Activated B cell treated with CpG ODN at 0.5 μM for 24 hours (primary cell): ENCODE measurements at regions of chr6 and their contacts with region 1.

Region 1: DNA sequence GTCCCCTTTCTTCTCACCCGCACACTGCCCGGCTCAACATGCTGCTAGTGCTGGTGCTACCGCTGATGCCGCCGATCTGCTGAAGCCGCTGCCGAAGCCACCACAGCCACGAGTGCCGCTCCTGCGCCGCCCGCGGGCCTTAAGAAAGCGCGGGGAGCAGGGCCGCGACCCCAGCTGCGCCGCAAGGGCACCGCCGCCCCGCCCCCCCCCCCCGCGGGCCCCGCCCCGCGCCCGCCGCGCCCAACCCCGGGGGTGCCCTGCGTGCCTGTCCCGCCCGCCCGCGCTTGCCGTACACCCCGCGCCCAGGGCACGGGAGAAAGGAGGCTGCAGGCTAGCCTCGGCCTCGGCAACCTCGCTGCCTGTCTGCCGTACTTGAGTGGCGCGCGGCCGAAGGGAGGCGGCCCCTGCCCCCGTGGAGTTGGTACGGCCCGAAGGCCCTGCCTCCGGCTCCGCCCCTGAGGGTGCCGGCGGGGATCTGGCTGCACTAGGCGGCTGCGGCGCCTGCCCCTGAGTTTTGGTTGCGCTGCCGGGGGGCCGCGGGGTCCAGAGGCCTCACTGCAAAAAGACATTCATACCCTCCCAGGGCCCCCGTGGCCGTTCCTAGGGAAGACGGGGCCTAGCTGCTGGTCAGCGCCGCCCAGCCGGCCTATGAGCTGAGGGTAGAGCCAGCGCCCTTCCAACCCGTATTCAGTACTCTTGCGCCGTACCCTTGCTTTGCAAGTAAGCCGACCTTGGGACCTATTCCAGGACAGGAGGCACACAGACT is at the start of gene SOD2:
- DNase-seq: peak; percentile 89
- ATAC-seq: peak; percentile 81
- H3K4me3 Mint-ChIP-seq: peak within 1 kb of the TSS; percentile 94
- H3K27ac Mint-ChIP-seq: peak within 1 kb of the TSS; percentile 92
- H3K4me1 Mint-ChIP-seq: peaks cover 36% of the 10 kb centered on the region
- H3K27me3 Mint-ChIP-seq: no peaks in the 10 kb centered on the region
- CTCF ChIP-seq: no peak
- total RNA-seq, gene SOD2: 91.0 and 98.2 TPM in 2 replicates

Region 2: GRCh38 chr6:159720708-159721107 is 27.4 kb after region 1 on chr6:
- CTCF ChIA-PET with region 1: interaction called, 11 read pairs
- POLR2A ChIA-PET with region 1: interaction called, 95 read pairs
- intact Hi-C with region 1: no loop called
- DNase-seq: no peak
- ATAC-seq: peak; percentile 58
- H3K4me3 Mint-ChIP-seq: no peak overlapping the region
- H3K27ac Mint-ChIP-seq: no peak overlapping the region
- H3K4me1 Mint-ChIP-seq: peaks cover 7% of the 10 kb centered on the region
- H3K27me3 Mint-ChIP-seq: no peaks in the 10 kb centered on the region
- CTCF ChIP-seq: no peak

Region 3: GRCh38 chr6:159761873-159762680 is 68.8 kb after region 1 on chr6 and contains the start of gene ACAT2:
- CTCF ChIA-PET with region 1: no interaction called
- POLR2A ChIA-PET with region 1: interaction called, 7 read pairs
- intact Hi-C with region 1: loop called (anchors 1 kb)
- DNase-seq: peak; percentile 85
- ATAC-seq: peak; percentile 95
- H3K4me3 Mint-ChIP-seq: peak within 1 kb of the TSS; percentile 96
- H3K27ac Mint-ChIP-seq: peak within 1 kb of the TSS; percentile 94
- H3K4me1 Mint-ChIP-seq: peaks cover 18% of the 10 kb centered on the region
- H3K27me3 Mint-ChIP-seq: no peaks in the 10 kb centered on the region
- CTCF ChIP-seq: no peak
- total RNA-seq, gene ACAT2: 82.0 and 87.9 TPM in 2 replicates

Region 4: GRCh38 chr6:159852877-159853276 is 159.6 kb after region 1 on chr6:
- CTCF ChIA-PET with region 1: interaction called, 3 read pairs
- POLR2A ChIA-PET with region 1: no interaction called
- intact Hi-C with region 1: loop called (anchors 1 kb)
- DNase-seq: no peak
- ATAC-seq: no peak
- H3K4me3 Mint-ChIP-seq: no peak overlapping the region
- H3K27ac Mint-ChIP-seq: no peak overlapping the region
- H3K4me1 Mint-ChIP-seq: no peaks in the 10 kb centered on the region
- H3K27me3 Mint-ChIP-seq: peaks cover 8% of the 10 kb centered on the region
- CTCF ChIP-seq: no peak

Region 5: GRCh38 chr6:159959165-159959975 is 266.1 kb after region 1 on chr6:
- CTCF ChIA-PET with region 1: no interaction called
- POLR2A ChIA-PET with region 1: no interaction called
- intact Hi-C with region 1: no loop called
- DNase-seq: no peak
- ATAC-seq: peak; percentile 97
- H3K4me3 Mint-ChIP-seq: no peak overlapping the region
- H3K27ac Mint-ChIP-seq: peak overlapping the region; percentile 57
- H3K4me1 Mint-ChIP-seq: peaks cover 14% of the 10 kb centered on the region
- H3K27me3 Mint-ChIP-seq: no peaks in the 10 kb centered on the region
- CTCF ChIP-seq: no peak

Region 6: DNA sequence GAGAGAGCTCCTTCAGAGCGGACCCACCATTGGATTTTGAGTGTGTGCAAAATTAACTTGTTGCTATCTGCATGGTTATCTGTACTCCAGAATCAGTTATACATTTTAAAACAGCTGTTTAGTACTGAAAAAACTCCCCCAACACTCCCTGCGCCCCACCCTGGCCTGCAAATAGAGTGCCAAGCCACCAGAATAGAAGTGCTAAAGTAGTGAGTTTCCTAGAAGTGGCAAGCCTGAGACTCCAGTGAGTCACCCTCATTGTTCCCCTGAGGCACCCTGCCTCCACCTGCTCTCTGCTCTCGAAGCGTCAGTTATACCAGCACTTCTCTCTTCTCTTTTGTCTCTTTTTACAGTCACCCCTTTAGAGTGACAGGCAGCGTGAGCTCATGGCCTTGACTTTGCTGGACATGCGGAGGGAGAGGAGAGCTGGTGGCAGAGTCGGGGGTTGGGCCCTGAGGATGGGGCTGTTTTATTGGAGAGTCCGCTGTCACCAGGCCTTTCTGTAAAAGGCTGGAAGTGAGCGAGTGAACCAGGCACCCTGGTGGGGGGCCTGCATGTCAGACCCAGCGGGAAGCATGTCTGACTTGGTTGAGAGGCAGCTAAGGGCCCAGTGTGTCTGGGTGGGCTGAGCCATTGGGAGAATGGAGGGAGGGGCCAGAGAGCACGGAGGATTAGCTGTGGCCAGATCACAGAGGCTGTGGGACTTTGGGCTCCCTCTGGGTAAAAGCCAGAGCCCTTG is 286.0 kb after region 1 on chr6:
- CTCF ChIA-PET with region 1: no interaction called
- POLR2A ChIA-PET with region 1: interaction called, 4 read pairs
- intact Hi-C with region 1: loop called (anchors 2 kb)
- DNase-seq: peak; percentile 61
- ATAC-seq: peak; percentile 86
- H3K4me3 Mint-ChIP-seq: peak overlapping the region; percentile 76
- H3K27ac Mint-ChIP-seq: peak overlapping the region; percentile 90
- H3K4me1 Mint-ChIP-seq: peaks cover 88% of the 10 kb centered on the region
- H3K27me3 Mint-ChIP-seq: no peaks in the 10 kb centered on the region
- CTCF ChIP-seq: no peak

Region 7: DNA sequence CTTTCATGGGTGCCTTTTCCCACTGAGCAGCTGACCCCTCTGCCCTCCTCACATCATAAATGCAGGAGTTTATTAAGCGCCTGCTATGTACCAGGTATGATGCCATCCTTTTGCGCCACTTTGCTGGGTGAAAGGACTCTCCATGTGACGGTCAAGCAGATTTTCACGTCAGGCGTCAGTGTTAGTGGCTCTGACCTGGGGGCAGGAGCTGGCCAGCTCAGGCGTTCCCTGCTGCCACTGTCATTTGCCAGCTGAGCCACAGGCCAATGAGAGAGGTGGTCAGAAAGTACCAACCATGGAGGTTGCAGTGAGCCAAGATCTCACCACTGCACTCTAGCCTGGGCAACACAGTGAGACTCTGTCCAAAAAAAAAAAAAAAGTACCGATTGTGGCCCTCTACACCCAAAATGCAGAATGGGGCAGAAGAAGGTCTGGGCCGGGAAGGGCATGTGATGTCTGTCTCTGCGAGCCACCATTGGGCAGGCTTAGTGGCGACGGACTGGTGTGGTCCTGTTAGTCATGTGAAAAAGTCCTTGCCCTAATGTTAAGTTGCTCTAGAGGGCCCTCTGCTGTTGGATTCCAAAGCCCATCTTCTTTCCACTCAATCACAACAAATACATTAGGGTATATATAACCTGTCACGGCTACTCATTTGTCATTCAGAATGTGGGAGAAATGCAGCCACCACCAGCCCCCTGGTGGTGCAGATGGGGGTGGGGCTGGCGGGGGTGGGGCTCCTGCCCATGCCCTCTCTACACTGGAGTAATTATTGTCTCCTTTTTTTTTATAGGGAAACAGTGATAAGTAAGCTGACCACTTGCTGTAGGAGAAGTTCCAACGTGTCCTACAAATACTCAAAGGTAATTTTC is 409.9 kb after region 1 on chr6:
- CTCF ChIA-PET with region 1: no interaction called
- POLR2A ChIA-PET with region 1: no interaction called
- intact Hi-C with region 1: loop called (anchors 1 kb)
- DNase-seq: no peak
- ATAC-seq: peak; percentile 45
- H3K4me3 Mint-ChIP-seq: no peak overlapping the region
- H3K27ac Mint-ChIP-seq: no peak overlapping the region
- H3K4me1 Mint-ChIP-seq: no peaks in the 10 kb centered on the region
- H3K27me3 Mint-ChIP-seq: no peaks in the 10 kb centered on the region
- CTCF ChIP-seq: no peak

Region 8: GRCh38 chr6:160534050-160534696 is 840.9 kb after region 1 on chr6:
- CTCF ChIA-PET with region 1: interaction called, 4 read pairs
- POLR2A ChIA-PET with region 1: no interaction called
- intact Hi-C with region 1: loop called (anchors 2 kb)
- DNase-seq: peak; percentile 32
- ATAC-seq: peak; percentile 56
- H3K4me3 Mint-ChIP-seq: no peak overlapping the region
- H3K27ac Mint-ChIP-seq: no peak overlapping the region
- H3K4me1 Mint-ChIP-seq: no peaks in the 10 kb centered on the region
- H3K27me3 Mint-ChIP-seq: peaks cover 9% of the 10 kb centered on the region
- CTCF ChIP-seq: peak; percentile 63